Activated T-helper 2 cell treated with anti-CD3 and anti-CD28 coated beads, Interferon-gamma antibody, Interleukin-2, Interleukin-4, amounts not matched to agents 10 μg/mL and 5 μg/mL and 100 μg/mL, durations not matched to agents 14 hours and 24 hours and 36 hours (primary cell): ENCODE measurements at regions of chr2 and their contacts with region 1.

Region 1: DNA sequence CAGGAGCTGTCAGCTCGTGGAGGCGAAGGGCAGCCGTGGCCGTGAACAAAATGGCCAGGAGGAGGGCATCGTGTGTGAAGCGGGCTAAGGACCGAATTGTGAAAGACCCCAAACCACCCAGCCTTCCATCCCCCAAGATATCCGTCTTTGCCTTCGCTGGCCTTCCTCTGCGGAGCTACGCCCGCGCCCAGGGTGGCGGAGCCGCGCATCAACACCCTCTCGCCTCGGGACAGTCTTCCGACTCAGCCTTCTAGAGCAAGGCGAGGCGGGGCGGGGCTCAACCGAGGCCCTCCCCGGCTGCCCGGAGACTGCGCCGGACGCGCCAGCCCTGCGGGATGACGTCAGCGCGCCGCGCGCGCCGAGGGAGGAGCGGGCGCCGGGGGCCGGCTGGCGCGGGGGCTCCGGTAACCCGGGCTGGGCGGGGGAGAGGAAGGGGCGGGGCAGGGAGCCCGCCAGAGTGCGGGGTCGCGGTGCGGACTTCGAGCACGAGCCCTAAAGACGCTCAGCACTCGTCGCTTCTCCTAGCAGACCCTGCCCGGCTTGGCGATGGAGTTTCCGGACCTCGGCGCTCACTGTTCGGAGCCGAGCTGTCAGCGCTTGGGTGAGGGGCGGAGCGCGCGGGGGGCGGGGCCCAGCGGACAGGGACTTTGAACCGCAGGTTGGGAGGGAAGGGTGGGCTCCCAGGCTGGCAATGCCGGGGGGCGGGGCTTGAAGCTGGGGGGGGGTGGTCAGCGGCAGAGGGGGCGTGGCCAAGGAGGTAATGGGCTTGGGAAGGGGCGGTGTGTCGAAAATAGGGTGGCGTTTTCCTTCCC is at the start of gene ZFAND2B:
- DNase-seq: peak; percentile 94
- H3K4me3 Mint-ChIP-seq: peak within 1 kb of the TSS; percentile 84
- H3K27ac Mint-ChIP-seq: peak within 1 kb of the TSS; percentile 90
- H3K4me1 Mint-ChIP-seq: peaks cover 38% of the 10 kb centered on the region
- H3K27me3 Mint-ChIP-seq: no peaks in the 10 kb centered on the region
- total RNA-seq, gene ZFAND2B: 27.3 and 33.5 TPM in 2 replicates

Region 2: DNA sequence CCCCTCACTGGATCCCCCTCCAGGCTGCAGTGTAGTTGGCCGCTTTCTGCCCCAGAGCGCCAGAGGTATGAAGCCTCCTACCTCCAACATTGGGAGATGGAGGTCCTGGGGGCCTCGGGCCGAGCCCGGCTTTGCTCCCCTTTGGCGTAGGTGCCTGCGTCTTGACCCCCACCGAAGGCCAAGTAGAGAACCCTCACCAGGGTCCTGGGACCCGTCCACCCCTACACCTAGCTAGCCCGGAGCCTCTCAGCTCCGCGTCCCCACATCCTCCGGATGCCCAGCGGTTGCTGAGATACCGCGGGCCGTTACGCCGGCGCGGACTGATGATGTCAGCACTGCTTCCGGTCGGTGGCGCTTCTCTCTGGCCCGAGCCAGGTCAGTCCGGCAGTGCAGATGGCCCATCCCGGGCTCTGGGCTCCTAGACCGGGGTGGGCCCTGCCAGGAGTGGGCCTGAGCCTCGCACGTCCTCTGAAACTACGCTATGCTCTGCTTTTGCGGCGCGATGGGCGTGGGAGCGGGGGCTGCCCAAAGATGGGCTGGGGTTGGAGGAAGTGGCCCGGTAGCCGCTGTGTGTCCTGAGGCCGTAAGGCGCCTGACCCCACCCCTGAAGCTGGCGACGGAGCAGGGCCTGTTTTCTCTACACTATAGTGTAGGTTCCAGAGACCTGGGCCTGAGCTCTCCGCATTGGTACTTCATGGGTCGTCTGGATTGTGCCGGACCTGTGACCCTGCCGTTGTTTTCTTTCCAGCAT is 38.7 kb after region 1 on chr2 and contains the starts of genes GLB1L and STK16:
- intact Hi-C with region 1: loop called (anchors 2 kb)
- DNase-seq: peak; percentile 88
- H3K4me3 Mint-ChIP-seq: peak within 1 kb of the TSS; percentile 96
- H3K27ac Mint-ChIP-seq: peak within 1 kb of the TSS; percentile 97
- H3K4me1 Mint-ChIP-seq: peaks cover 50% of the 10 kb centered on the region
- H3K27me3 Mint-ChIP-seq: no peaks in the 10 kb centered on the region
- total RNA-seq, gene GLB1L: 4.2 and 4.4 TPM in 2 replicates
- total RNA-seq, gene STK16: 32.0 and 33.3 TPM in 2 replicates